ENCODE measurements at regions of chr12 and their contacts with region 1.

Region 1: DNA sequence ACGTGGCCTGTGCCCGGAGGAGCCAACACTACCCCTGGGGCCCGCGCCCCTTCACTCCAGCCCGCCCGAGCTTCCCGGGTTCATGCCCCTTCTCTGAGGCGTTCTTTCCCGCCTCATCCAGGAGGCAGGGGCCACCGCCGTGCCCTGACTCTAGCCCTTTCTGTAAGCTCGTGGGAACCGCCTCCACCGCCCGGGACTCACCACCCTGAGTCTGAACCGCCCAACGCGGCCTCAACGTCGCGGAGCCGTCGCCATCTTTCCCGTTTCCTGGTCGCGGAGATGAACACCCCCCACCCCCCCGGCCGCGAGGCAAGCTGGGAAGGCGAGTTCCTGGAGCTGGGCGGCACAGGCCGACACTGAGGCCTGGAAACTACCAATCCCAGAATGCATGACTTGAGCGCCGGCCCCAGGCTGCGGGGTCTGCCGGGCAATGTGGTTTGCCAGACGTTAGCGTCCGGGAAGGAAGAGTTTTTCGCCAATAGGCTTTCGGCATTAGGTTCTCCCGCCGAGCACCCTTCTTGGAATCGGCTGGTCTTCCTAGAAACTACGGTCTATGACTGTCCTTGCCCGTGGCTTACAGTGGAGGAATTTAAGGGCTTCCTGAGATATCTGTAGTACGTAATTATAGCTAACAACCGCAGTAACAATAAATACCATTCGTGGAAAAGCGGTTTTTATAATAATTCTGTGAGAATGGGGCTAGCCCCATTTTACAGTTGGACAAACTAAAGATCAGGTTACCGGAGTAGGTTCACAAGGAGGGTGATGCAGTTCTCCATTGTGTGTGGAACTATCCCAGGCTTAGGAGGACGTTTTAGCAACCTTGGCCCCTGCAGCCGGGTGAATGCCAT is at the start of gene DDX23:
- DNase-seq: peak; percentile 81 to 95 (median 89)
- ATAC-seq: peak; percentile 93
- H3K4me3 Mint-ChIP-seq: peak within 1 kb of the TSS; percentile 89 to 99 (median 96)
- H3K27ac Mint-ChIP-seq: peak within 1 kb of the TSS; percentile 90 to 99 (median 96)
- H3K4me1 Mint-ChIP-seq: peaks cover 25 to 44% (median 39%) of the 10 kb centered on the region in 4 donors
- H3K27me3 Mint-ChIP-seq: no peaks in the 10 kb centered on the region
- polyA plus RNA-seq, gene DDX23: 27.6 to 52.2 (median 33.8) TPM

Region 2: DNA sequence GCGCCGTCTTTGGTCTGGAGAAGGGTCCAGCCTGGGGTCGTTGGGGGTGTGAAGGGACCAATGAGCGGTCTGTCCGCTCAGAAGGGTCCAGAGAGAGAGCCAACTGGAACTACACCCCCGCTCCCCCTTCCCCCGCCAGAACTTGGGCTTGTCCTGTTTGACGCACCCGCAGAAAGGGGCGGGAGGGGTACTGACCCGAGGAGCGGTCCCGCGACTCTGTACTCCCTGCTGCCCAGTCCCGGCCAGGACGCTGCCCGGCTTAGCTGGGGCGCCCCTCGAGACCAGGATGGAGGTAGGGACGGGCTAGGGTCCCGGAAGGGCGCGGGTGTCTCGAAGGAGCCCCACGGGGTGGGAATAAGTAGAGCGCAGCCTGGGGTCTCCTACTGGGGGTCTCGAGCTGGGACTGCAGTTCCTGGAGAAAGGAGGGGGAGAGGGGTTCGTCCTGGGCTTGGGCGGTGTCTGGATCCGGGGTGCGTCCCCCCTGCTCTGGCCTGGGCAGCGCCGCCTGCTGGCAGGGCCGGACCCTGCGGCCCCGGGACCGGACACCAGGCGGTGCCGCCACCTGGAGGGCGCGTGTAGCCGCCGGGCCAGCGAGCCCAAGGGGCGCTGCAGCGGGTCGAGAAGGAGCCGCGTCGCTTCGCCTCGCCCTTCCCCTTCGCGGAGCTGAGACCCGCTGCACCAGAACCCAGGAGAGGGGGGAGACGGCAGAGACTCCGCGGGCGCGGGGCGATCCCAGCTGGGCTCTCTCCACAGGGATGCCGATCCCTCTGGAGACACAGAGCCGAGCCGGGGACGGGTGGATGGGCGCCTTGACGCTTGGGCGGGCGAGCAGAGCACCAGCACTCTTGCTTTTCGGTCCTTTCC is 37.6 kb before region 1 on chr12:
- POLR2A ChIA-PET with region 1: interaction called, 12 read pairs
- DNase-seq: peak; percentile 34 to 77 (median 63)
- ATAC-seq: peak; percentile 57 to 60
- H3K4me3 Mint-ChIP-seq: peak overlapping the region; percentile 72 to 96 (median 90)
- H3K27ac Mint-ChIP-seq: peak overlapping the region in 4 of 10 donors; percentile 4 to 79 (median 64)
- H3K4me1 Mint-ChIP-seq: peaks cover 12 to 54% (median 32%) of the 10 kb centered on the region in 4 donors
- H3K27me3 Mint-ChIP-seq: peaks cover 2 to 17% (median 5%) of the 10 kb centered on the region in 5 donors

Region 3: DNA sequence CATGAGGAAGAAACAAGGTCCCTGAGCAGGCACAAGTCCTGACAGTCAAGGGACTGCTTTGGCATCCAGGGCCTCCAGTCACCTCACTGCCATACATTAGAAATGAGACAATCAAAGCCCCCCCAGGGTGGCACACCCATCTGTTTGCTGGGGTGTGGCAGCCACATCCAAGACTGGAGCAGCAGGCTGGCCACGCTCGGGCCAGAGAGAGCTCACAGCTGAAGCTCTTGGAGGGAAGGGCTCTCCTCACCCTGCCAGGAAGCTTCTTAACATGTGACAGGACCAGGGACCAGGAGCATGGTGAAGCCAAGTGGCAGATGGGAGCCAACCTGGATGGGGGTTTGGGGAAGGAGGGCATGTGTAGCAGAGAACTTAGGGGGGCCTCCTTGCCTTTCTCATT is 23.8 kb before region 1 on chr12:
- POLR2A ChIA-PET with region 1: no interaction called
- DNase-seq: no peak
- ATAC-seq: no peak
- H3K4me3 Mint-ChIP-seq: no peak overlapping the region
- H3K27ac Mint-ChIP-seq: peak overlapping the region in 2 of 10 donors; percentile 32 to 33
- H3K4me1 Mint-ChIP-seq: peaks cover 0 to 4% (median 2%) of the 10 kb centered on the region in 4 donors
- H3K27me3 Mint-ChIP-seq: no peaks in the 10 kb centered on the region

Region 4: GRCh38 chr12:48865434-48866290 is 13.6 kb after region 1 on chr12 and contains the start of gene RND1:
- POLR2A ChIA-PET with region 1: interaction called, 46 read pairs
- DNase-seq: peak; percentile 64 to 92 (median 86)
- ATAC-seq: peak; percentile 91 to 97
- H3K4me3 Mint-ChIP-seq: peak within 1 kb of the TSS; percentile 82 to 99 (median 94)
- H3K27ac Mint-ChIP-seq: peak within 1 kb of the TSS; percentile 60 to 98 (median 90)
- H3K4me1 Mint-ChIP-seq: peaks cover 13 to 25% (median 24%) of the 10 kb centered on the region in 4 donors
- H3K27me3 Mint-ChIP-seq: peaks cover 17 to 39% (median 28%) of the 10 kb centered on the region in 5 donors
- polyA plus RNA-seq, gene RND1: 0.15 to 2.1 (median 1.3) TPM

Region 5: GRCh38 chr12:48890657-48891418 is 38.7 kb after region 1 on chr12:
- POLR2A ChIA-PET with region 1: interaction called, 47 read pairs
- DNase-seq: peak; percentile 52 to 80 (median 69)
- ATAC-seq: peak; percentile 98 to 100
- H3K4me3 Mint-ChIP-seq: peak overlapping the region in 4 of 10 donors; percentile 1 to 41 (median 20)
- H3K27ac Mint-ChIP-seq: peak overlapping the region in 4 of 10 donors; percentile 8 to 84 (median 52)
- H3K4me1 Mint-ChIP-seq: peaks cover 0 to 7% (median 3%) of the 10 kb centered on the region in 4 donors
- H3K27me3 Mint-ChIP-seq: peaks cover 8 to 26% (median 18%) of the 10 kb centered on the region in 5 donors

Region 6: GRCh38 chr12:48924617-48925303 is 72.7 kb after region 1 on chr12:
- POLR2A ChIA-PET with region 1: interaction called, 34 read pairs
- DNase-seq: peak; percentile 72 to 88 (median 80)
- ATAC-seq: peak; percentile 78 to 79
- H3K4me3 Mint-ChIP-seq: peak overlapping the region; percentile 88 to 99 (median 96)
- H3K27ac Mint-ChIP-seq: peak overlapping the region; percentile 94 to 99 (median 98)
- H3K4me1 Mint-ChIP-seq: peaks cover 22 to 52% (median 52%) of the 10 kb centered on the region in 4 donors
- H3K27me3 Mint-ChIP-seq: no peaks in the 10 kb centered on the region

Region 7: GRCh38 chr12:48936379-48936979 is 84.4 kb after region 1 on chr12:
- POLR2A ChIA-PET with region 1: interaction called, 14 read pairs
- DNase-seq: peak; percentile 73 to 91 (median 84)
- ATAC-seq: peak; percentile 68 to 84
- H3K4me3 Mint-ChIP-seq: no peak overlapping the region
- H3K27ac Mint-ChIP-seq: peak overlapping the region in 9 of 10 donors; percentile 59 to 93 (median 78)
- H3K4me1 Mint-ChIP-seq: peaks cover 20 to 58% (median 32%) of the 10 kb centered on the region in 4 donors
- H3K27me3 Mint-ChIP-seq: no peaks in the 10 kb centered on the region

Region 8: GRCh38 chr12:48957141-48958048 is 105.3 kb after region 1 on chr12 and contains the start of gene ARF3:
- POLR2A ChIA-PET with region 1: interaction called, 11 read pairs
- DNase-seq: peak; percentile 88 to 96 (median 92)
- ATAC-seq: peak; percentile 94
- H3K4me3 Mint-ChIP-seq: peak within 1 kb of the TSS; percentile 91 to 99 (median 98)
- H3K27ac Mint-ChIP-seq: peak within 1 kb of the TSS; percentile 86 to 97 (median 95)
- H3K4me1 Mint-ChIP-seq: peaks cover 26 to 54% (median 46%) of the 10 kb centered on the region in 4 donors
- H3K27me3 Mint-ChIP-seq: peaks cover 0 to 2% (median 0%) of the 10 kb centered on the region in 5 donors
- polyA plus RNA-seq, gene ARF3: 19.5 to 24.4 (median 21.8) TPM

Measured in naive thymus-derived CD8-positive, alpha-beta T cell (primary cell).